Posterior vena cava (tissue), 2 donors: ENCODE measurements at regions of chr7 and their contacts with region 1.

Region 1: GRCh38 chr7:151876899-151877777 is at the start of gene PRKAG2:
- DNase-seq: peak; percentile 94
- total RNA-seq, gene PRKAG2: 91.8 to 94.2 TPM

Region 2: GRCh38 chr7:151616443-151617213 is 260.5 kb before region 1 on chr7:
- intact Hi-C with region 1: no loop called
- DNase-seq: no peak

Region 3: DNA sequence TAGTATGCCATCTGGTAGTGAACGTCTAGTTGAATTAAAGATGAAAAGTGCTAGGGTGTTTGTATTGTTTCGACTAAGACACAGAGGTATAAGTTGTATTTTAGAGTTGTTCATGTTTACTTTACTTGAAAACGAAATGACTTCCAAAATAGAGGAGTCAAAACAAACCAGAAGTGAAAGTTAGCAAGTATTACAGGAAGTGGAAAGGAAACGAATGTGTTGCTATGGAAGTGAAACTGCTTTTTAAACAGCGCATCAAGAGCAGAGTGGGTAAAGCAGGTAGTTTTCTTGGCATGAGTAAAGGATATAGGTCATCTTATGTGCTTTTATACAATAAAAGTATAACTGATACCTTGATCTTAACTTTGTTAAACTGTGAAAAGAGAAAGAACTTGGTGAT is 59.1 kb after region 1 on chr7:
- intact Hi-C with region 1: loop called in 1 of 2 experiments (anchors 10 kb)
- DNase-seq: no peak